ENCODE measurements at regions of chr3 and their contacts with region 1.

Region 1: DNA sequence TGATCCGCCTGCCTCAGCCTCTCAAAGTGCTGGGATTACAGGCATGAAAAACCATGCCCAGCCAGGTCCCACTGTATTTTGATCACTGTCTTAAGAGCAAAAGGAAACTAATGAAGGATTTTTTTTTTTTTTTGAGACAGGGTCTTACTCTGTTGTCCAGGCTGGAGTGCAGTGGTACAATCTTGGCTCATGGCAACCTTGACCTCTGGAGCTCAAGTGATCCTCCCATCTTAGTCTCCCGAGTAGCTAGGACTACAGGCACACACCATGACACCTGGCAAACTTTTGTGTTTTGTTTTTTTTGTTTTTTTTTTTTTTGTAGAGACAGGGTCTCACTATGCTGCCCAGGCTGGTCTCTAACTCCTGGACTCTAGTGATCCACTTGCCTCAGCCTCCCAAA is 6.4 kb downstream of the EMC3 start:
- DNase-seq: no peak
- H3K4me3 ChIP-seq: no peak overlapping the region
- H3K27ac ChIP-seq: no peak overlapping the region
- H3K4me1 ChIP-seq: peaks cover 0 to 5% of the 10 kb centered on the region in 2 donors
- H3K27me3 ChIP-seq: no peaks in the 10 kb centered on the region
- CTCF ChIP-seq: no peak
- POLR2A ChIP-seq: no peak

Region 2: DNA sequence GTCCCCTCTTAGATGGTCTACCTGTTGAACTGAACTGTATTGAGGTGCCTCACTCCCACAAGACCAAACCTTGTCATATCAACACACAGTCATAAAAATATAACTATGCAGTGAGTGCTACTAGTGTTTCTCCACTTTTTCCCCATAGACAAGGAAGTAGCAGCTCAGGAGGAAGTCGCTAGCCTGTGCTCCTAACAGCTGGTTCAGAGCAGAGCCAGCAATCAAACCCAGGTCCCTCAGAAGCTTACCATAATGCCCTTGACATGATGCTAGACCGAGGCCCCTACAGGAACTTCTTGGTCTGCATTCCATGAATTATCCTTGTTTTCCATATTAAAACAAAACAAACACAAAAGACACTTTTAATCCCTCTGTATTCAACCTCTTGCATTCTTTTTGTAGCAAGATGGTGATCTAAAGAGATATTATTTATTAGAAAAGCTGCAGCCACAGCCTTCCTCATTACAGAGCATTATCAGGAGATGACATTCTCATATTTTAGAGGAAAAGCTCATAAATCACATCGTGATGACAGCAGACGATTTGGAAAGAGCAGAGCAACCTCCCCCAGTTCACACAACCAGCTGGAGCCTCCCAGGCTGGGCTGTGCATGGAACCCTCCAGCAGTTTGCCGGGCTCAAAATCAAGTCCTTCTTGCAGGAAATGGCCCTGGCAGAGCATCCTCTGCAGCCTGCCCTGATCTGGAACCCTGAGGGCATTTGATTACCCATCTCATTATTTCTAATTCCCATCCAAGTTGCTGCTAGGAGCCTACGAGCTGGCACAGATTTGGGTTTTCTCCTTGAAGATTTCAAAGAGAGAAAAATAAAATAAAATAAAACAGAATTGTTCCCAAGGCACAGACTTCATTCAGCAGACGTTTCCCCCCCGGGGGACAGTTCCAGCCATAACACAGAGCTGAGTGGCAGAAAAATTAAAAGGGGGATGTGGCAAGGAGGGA is 849.6 kb before region 1 on chr3:
- intact Hi-C with region 1: loop called (anchors 5 kb)
- DNase-seq: no peak
- H3K4me3 ChIP-seq: no peak overlapping the region
- H3K27ac ChIP-seq: no peak overlapping the region
- H3K4me1 ChIP-seq: peaks cover 0 to 6% of the 10 kb centered on the region in 2 donors
- H3K27me3 ChIP-seq: no peaks in the 10 kb centered on the region
- CTCF ChIP-seq: no peak
- POLR2A ChIP-seq: no peak

Measured in breast epithelium (tissue), 4 donors.